PC-3 (cell line): ENCODE measurements at regions of chr17 and their contacts with region 1.

Region 1: GRCh38 chr17:49637050-49637449 is 40.8 kb downstream of the SPOP start:
- DNase-seq: peak; percentile 22
- ATAC-seq: no peak
- H3K4me3 ChIP-seq: no peak overlapping the region
- H3K27ac ChIP-seq: no peak overlapping the region
- H3K4me1 ChIP-seq: peaks cover 13% of the 10 kb centered on the region
- H3K27me3 ChIP-seq: no peaks in the 10 kb centered on the region
- CTCF ChIP-seq: no peak

Region 2: DNA sequence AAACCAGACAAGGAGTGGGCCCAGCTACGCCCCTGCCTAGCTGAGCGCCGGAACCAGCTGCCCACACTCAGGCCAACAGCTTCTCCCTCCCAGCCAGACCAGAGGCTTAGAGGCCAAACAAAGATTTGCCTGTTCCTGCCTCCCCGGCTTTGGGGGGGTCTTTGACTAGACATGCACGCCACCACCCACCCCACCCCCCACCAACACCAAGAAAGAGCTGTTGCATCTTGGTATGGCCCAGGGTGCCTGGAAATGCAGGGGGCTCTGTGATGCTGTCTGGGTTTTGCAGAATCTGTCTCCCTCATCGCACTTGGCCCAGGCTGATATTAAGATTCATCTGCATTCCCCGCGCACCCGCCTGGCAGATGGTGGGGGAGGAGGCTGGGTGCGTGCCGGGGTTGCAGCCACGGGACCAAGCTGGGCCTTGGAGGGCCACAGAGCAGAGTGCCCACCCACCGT is 62.7 kb before region 1 on chr17:
- CTCF ChIA-PET with region 1: no interaction called
- POLR2A ChIA-PET with region 1: no interaction called
- intact Hi-C with region 1: loop called (anchors 5 kb)
- DNase-seq: no peak
- ATAC-seq: no peak
- H3K4me3 ChIP-seq: no peak overlapping the region
- H3K27ac ChIP-seq: no peak overlapping the region
- H3K4me1 ChIP-seq: peaks cover 6% of the 10 kb centered on the region
- H3K27me3 ChIP-seq: peaks cover 16% of the 10 kb centered on the region
- CTCF ChIP-seq: no peak

Region 3: DNA sequence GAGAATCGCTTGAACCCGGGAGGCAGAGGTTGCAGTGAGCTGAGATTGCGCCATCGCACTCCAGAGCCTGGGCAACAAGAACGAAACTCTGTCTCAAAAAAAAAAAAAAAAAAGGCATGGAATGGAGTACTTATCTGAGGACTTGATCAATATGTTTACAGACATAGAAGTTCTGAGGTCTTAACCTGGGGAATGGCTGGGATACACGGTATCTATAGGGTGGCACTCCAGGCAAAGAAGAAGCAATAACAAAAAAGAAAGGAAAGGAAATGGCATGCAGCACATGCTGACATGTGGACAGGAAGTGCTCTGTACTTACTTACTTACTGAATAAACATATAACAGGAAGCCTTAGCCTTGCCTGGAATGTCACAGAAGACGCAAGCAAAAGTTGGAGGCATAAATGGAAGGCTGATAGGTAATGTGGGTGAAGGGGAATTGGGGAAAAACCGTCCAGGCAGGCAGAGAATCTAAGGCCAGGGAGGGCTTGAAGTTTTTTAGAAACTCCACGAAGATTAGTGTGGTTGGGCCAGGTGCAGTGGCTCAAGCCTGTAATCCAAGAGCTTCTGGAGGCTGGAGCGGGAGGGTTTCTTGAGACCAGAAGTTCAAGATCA is 50.9 kb after region 1 on chr17:
- CTCF ChIA-PET with region 1: no interaction called
- POLR2A ChIA-PET with region 1: no interaction called
- intact Hi-C with region 1: no loop called
- DNase-seq: peak; percentile 49
- ATAC-seq: peak; percentile 88
- H3K4me3 ChIP-seq: no peak overlapping the region
- H3K27ac ChIP-seq: no peak overlapping the region
- H3K4me1 ChIP-seq: peaks cover 5% of the 10 kb centered on the region
- H3K27me3 ChIP-seq: no peaks in the 10 kb centered on the region
- CTCF ChIP-seq: no peak